Caco-2 (cell line): ENCODE measurements at regions of chr15 and their contacts with region 1.

Region 1: GRCh38 chr15:90233376-90234095 is at the start of gene CIB1:
- DNase-seq: peak; percentile 96 to 97
- H3K4me3 ChIP-seq: peak within 1 kb of the TSS; percentile 63
- H3K4me3 Mint-ChIP-seq: peak within 1 kb of the TSS; percentile 80
- H3K27ac Mint-ChIP-seq: peak within 1 kb of the TSS; percentile 88
- H3K4me1 ChIP-seq: no peaks in the 10 kb centered on the region; the same call in 1 of the 2 replicates
- H3K4me1 Mint-ChIP-seq: peaks cover 16% of the 10 kb centered on the region
- H3K27me3 ChIP-seq: no peaks in the 10 kb centered on the region
- H3K27me3 Mint-ChIP-seq: no peaks in the 10 kb centered on the region
- CTCF ChIP-seq: peak in 1 of 2 experiments; percentile 79
- total RNA-seq, gene CIB1: 37.7 and 44.5 TPM in 2 replicates

Region 2: DNA sequence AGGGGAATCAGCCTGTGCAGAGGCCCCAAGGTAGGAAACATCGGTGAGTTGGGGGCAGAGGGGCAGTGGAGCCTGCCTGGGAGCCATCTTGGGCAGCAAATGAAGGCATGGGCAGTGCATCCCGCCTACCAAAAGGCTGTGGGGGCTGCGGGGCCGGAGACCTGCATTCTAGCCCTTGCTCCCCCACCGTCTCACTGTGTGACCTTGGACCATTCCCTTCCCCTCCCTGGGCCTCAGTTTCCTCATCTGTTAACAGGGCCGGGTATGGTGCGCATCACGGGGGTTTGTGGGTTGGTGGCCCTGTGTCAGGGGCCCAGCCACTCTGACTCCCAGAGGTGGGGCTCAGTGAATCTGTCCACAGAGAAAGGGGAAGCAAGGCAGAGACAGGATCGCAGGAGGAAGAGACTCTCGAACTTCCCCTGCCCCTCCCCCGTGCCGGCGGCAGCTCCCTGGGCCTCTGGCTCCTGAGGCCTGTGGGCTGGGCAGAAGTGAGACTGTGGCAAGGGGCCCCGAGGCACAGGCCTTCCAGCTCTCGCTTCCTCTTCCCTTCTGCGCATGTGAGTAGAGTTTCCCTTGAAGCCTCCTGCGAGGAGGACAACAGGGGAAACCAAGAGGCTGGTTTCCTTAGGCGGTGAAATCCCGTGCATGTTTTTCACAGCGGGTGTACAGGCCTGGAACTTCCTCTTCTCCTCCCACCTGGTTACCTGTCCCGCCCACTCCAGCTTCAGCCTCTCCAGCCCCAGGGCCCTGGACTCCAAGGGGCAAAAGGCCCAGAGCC is 174.1 kb before region 1 on chr15:
- CTCF ChIA-PET with region 1: no interaction called
- POLR2A ChIA-PET with region 1: no interaction called
- intact Hi-C with region 1: no loop called
- DNase-seq: no peak
- H3K4me3 ChIP-seq: no peak overlapping the region
- H3K4me3 Mint-ChIP-seq: no peak overlapping the region
- H3K27ac Mint-ChIP-seq: no peak overlapping the region
- H3K4me1 ChIP-seq: no peaks in the 10 kb centered on the region
- H3K4me1 Mint-ChIP-seq: no peaks in the 10 kb centered on the region
- H3K27me3 ChIP-seq: no peaks in the 10 kb centered on the region
- H3K27me3 Mint-ChIP-seq: no peaks in the 10 kb centered on the region
- CTCF ChIP-seq: no peak

Region 3: DNA sequence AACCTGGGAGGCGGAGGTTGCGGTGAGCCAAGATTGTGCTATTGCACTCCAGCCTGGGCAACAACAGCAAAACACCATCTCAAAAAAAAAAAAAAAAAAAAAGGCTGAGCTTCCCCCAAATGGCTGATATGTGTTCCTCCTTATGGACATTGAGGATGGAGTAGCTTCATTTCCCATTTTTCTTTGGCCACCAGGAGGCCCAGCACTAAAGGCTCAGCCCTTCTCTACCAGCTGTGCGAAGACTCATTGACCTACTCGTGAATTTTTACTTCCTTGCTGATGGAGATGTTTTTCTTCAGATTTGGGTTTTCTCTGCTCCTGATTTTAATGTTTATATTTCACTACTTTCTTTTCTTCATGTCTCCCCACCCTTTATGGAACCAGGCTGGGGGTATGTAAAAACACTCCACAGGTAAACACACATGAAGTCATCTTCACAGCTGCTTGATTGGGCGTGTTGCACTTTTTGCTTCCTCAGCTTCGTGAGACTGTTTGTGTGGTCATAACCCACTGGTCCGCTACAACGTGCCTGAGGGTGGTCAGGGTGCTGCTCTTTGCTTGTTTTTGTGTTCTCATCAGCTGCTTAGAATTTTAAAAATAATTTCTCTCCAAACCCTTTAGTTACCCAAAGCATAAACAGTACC is 18.9 kb before region 1 on chr15:
- CTCF ChIA-PET with region 1: interaction called, 21 read pairs
- POLR2A ChIA-PET with region 1: no interaction called
- intact Hi-C with region 1: no loop called
- DNase-seq: no peak
- H3K4me3 ChIP-seq: no peak overlapping the region
- H3K4me3 Mint-ChIP-seq: no peak overlapping the region
- H3K27ac Mint-ChIP-seq: no peak overlapping the region
- H3K4me1 ChIP-seq: peaks cover 10% of the 10 kb centered on the region; the same call in 1 of the 2 replicates
- H3K4me1 Mint-ChIP-seq: no peaks in the 10 kb centered on the region
- H3K27me3 ChIP-seq: no peaks in the 10 kb centered on the region
- H3K27me3 Mint-ChIP-seq: no peaks in the 10 kb centered on the region
- CTCF ChIP-seq: peak; percentile 22 to 35

Region 4: GRCh38 chr15:90249203-90249863 is 15.8 kb after region 1 on chr15 and contains the start of gene TTLL13:
- CTCF ChIA-PET with region 1: interaction called, 9 read pairs
- POLR2A ChIA-PET with region 1: interaction called, 23 read pairs
- intact Hi-C with region 1: loop called (anchors 1 kb)
- DNase-seq: peak; percentile 97 to 98
- H3K4me3 ChIP-seq: peak within 1 kb of the TSS; percentile 51
- H3K4me3 Mint-ChIP-seq: peak within 1 kb of the TSS; percentile 73
- H3K27ac Mint-ChIP-seq: peak within 1 kb of the TSS; percentile 61
- H3K4me1 ChIP-seq: peaks cover 7% of the 10 kb centered on the region; the same call in 1 of the 2 replicates
- H3K4me1 Mint-ChIP-seq: peaks cover 6% of the 10 kb centered on the region
- H3K27me3 ChIP-seq: no peaks in the 10 kb centered on the region
- H3K27me3 Mint-ChIP-seq: no peaks in the 10 kb centered on the region
- CTCF ChIP-seq: no peak
- total RNA-seq, gene TTLL13: 0.43 TPM in 1 of 2 replicates, not detected in the other

Region 5: GRCh38 chr15:90286678-90287077 is 53.1 kb after region 1 on chr15:
- CTCF ChIA-PET with region 1: no interaction called
- POLR2A ChIA-PET with region 1: no interaction called
- intact Hi-C with region 1: loop called (anchors 5 kb)
- DNase-seq: peak in 1 of 2 experiments; percentile 24
- H3K4me3 ChIP-seq: no peak overlapping the region
- H3K4me3 Mint-ChIP-seq: no peak overlapping the region
- H3K27ac Mint-ChIP-seq: no peak overlapping the region
- H3K4me1 ChIP-seq: peaks cover 3% of the 10 kb centered on the region; the same call in 1 of the 2 replicates
- H3K4me1 Mint-ChIP-seq: no peaks in the 10 kb centered on the region
- H3K27me3 ChIP-seq: no peaks in the 10 kb centered on the region
- H3K27me3 Mint-ChIP-seq: no peaks in the 10 kb centered on the region
- CTCF ChIP-seq: peak in 1 of 2 experiments; percentile 43